ENCODE measurements at regions of chr7 and their contacts with region 1.

Region 1: DNA sequence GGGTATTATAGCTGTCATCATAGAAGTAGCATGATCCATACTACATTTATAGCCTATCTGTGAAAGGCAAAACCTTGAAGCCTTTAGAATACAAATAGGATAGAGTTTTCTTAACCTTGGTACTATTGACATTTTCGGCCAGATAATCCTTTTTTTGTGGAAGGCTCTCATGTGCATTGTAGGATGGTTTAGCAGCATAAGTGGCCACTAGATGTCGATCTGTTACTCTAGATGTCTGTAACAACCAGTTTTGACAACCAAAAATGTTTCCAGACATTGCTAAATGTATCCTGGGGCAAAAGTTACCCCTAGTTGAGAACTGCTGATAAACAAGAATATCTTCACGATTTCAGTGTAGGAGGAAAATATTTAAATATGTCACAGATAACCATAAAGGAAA is 319.4 kb upstream of the GALNT17 start:
- DNase-seq: no peak
- ATAC-seq: no peak

Region 2: DNA sequence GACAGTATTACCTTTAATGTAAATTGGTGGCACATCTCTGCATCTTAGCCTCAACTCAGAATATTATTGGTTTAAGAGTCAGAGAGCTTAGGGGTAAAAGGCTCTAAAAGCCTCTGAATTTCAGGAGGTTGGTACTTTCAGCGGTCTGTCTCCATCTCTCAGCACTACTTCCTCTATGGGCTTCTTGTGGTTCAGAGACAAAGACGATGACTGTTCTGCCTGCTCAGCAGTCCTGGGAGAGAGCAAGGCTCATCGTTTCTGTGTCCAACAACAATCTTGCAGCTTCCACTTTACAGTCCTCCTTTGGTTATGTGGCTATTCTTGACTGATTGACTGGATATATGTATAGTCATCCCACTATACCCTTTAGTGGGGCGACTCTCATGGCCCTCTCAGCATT is 819.6 kb before region 1 on chr7:
- intact Hi-C with region 1: loop called (anchors 5 kb)
- DNase-seq: no peak
- ATAC-seq: peak; percentile 68

Region 3: DNA sequence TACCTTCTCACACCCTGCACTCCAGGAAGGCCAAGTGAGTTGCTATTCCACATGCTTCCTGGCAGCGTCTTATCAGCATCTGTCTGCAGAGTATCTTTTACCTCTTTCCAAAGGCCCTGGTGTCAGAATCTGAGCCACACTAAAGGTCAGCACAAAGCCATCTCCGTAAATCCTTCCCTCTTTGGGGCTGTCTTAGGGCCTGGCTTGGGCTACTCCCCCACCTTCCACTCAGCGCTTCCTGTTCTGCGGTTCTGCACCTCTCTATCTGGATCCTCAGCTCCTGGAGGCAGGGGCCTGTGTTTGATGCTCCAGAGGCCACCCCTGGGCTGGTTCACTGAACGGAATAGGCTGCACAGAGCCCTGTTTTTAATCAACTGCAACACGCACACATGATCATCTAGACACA is 15.4 kb before region 1 on chr7:
- intact Hi-C with region 1: no loop called
- DNase-seq: no peak
- ATAC-seq: peak; percentile 36

Region 4: DNA sequence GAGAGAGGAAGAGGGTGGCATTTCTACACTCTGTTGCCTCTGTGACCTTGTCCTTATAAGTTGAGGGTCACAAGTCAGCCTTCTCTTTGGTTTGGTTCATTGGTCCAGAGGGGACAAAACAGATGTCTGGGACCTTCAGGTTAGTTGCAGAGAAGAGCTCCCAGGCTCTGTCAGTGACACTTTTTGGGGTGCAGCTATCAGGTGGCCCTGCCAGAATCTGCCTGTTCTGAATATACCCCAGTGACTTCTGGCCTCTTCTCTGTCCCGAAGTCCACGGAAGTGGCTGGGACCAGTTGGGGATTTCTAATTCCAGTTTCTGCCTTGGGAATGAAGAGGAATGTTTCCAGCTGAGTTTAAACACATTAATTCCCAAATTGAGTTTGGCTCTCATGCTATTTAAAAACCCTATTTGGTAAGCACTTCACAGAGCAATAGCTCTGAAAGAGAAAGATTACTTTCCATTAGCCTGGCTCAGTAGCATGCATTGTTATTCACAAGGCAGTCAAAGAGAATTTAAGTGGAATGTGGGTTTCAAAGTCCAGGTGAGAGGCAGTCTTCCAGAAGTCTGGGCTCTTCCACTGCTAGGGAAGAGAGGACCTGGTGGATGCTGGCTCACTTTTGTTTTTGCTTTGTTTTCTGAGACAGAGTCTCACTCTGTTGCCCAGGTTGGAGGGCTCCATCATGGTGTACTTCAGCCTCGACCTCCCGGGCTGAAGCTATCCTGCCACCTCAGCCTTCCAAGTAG is 81.6 kb after region 1 on chr7:
- intact Hi-C with region 1: no loop called
- DNase-seq: no peak
- ATAC-seq: no peak